ENCODE measurements at regions of chr13 and their contacts with region 1.

Region 1: GRCh38 chr13:49495783-49496762 is at the start of gene PHF11:
- DNase-seq: peak; percentile 95
- H3K4me3 Mint-ChIP-seq: peak within 1 kb of the TSS; percentile 91
- H3K27ac Mint-ChIP-seq: peak within 1 kb of the TSS; percentile 96
- H3K4me1 Mint-ChIP-seq: peaks cover 49% of the 10 kb centered on the region
- H3K27me3 Mint-ChIP-seq: no peaks in the 10 kb centered on the region
- total RNA-seq, gene PHF11: 91.4 to 96.9 TPM

Region 2: GRCh38 chr13:48892053-48892690 is 603.9 kb before region 1 on chr13:
- CTCF ChIA-PET with region 1: no interaction called
- intact Hi-C with region 1: loop called (anchors 1 kb)
- DNase-seq: no peak
- H3K4me3 Mint-ChIP-seq: no peak overlapping the region
- H3K27ac Mint-ChIP-seq: peak overlapping the region; percentile 39
- H3K4me1 Mint-ChIP-seq: peaks cover 32% of the 10 kb centered on the region
- H3K27me3 Mint-ChIP-seq: peaks cover 2% of the 10 kb centered on the region

Region 3: DNA sequence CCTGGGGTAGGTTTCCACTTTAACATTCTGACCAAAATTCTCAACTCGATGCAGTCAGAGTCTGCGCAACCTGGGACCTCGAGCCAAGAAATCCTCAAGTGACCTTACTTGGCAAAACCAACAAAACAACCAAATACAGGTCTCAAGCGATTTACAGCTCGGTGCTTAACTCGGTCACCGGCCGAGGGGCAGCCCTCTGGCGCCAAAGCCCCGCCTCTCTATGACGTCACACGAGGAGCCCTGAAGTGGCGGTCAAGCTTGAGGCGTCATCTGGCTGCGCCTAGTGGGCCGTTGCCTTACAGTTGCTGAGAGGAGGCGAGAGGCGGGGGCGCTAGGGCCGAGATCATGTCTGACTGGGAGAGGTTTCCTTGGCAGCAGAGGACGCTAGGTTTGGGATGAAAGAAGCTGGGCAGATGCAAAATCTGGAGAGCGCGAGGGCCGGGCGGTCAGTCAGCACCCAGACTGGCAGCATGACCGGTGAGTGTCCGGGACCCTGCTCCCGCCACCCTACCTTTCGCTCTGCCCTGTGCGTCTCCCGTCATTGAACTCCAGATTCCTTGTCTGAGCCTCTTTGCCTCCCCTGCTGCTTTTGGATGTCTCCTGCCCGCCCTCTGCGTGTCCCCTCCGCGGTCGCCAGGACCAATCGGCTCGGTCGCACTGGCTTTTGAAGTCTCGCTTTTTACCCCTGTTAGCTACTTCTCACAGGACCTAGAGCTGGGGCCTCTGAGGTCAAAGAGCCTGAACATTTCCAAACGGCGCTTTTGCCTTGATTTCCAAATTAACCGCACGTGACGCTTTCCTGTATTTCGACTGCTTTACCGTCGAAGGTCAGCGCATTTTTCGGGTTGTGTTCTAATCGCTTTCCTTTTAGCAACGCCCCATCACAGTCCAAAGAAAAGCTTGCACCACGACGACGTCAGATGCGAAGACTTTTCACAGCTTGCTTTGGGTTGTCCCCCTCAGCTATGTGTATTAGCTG is 248.1 kb before region 1 on chr13 and contains the start of gene CDADC1:
- CTCF ChIA-PET with region 1: no interaction called
- intact Hi-C with region 1: loop called (anchors 5 kb)
- DNase-seq: peak; percentile 96
- H3K4me3 Mint-ChIP-seq: peak within 1 kb of the TSS; percentile 98
- H3K27ac Mint-ChIP-seq: peak within 1 kb of the TSS; percentile 92
- H3K4me1 Mint-ChIP-seq: peaks cover 34% of the 10 kb centered on the region
- H3K27me3 Mint-ChIP-seq: no peaks in the 10 kb centered on the region
- total RNA-seq, gene CDADC1: 13.2 to 14.7 TPM

Region 4: GRCh38 chr13:49454388-49455006 is 41.6 kb before region 1 on chr13:
- CTCF ChIA-PET with region 1: no interaction called
- intact Hi-C with region 1: loop called (anchors 1 kb)
- DNase-seq: no peak
- H3K4me3 Mint-ChIP-seq: no peak overlapping the region
- H3K27ac Mint-ChIP-seq: no peak overlapping the region
- H3K4me1 Mint-ChIP-seq: peaks cover 20% of the 10 kb centered on the region
- H3K27me3 Mint-ChIP-seq: no peaks in the 10 kb centered on the region

Region 5: GRCh38 chr13:49549289-49549688 is 53.2 kb after region 1 on chr13:
- CTCF ChIA-PET with region 1: no interaction called
- intact Hi-C with region 1: no loop called
- DNase-seq: no peak
- H3K4me3 Mint-ChIP-seq: no peak overlapping the region
- H3K27ac Mint-ChIP-seq: no peak overlapping the region
- H3K4me1 Mint-ChIP-seq: no peaks in the 10 kb centered on the region
- H3K27me3 Mint-ChIP-seq: no peaks in the 10 kb centered on the region

Region 6: DNA sequence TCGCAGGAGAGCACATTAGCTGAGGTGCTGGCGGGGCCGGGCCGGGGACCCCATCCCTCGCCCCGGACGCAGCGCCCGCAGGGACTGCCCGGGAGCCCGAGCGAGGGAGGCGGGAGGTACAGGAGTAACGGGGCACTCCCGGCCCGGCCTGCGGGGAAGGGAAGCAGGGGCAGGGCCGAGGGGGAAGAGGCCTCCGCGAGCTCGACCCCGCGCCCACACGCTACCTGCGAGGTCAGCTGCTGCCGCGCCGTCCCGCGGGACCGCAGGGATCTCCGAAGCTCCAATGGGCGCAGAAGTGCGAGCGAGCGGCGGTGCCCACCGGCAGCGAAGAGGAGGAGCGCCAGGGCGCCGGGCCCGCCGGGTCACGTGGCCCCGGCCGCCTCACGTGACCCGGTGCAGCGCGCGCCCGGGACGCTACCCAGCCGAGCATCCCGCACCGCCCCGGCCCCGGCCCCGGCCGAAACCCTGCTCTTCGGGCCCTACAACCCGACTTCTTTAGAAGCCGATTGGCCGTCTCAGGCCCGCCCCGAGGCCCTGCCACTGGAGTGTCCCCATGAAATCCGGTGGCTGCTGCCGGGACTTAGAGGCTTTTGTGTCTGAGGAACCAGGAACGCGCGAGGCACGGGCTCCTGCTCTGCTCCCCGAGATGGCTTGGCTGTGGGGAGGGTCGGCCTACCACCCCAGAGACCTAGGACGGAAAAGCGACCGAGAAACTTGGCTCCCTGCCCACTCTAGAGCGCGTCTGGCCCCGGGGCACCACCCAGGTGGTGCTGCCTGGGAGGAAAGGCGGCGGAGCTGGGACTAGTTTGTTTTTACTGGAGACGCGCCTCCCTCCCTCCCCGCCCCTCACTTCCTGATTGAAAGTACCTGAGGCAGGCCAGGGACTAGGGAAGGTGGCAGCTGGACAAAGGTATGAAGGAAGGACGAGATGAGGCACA is 89.4 kb after region 1 on chr13 and contains the start of gene RCBTB1:
- CTCF ChIA-PET with region 1: no interaction called
- intact Hi-C with region 1: loop called (anchors 1 kb)
- DNase-seq: peak; percentile 56
- H3K4me3 Mint-ChIP-seq: peak within 1 kb of the TSS; percentile 88
- H3K27ac Mint-ChIP-seq: peak within 1 kb of the TSS; percentile 61
- H3K4me1 Mint-ChIP-seq: peaks cover 25% of the 10 kb centered on the region
- H3K27me3 Mint-ChIP-seq: no peaks in the 10 kb centered on the region
- total RNA-seq, gene RCBTB1: 17.8 to 19.2 TPM

Region 7: DNA sequence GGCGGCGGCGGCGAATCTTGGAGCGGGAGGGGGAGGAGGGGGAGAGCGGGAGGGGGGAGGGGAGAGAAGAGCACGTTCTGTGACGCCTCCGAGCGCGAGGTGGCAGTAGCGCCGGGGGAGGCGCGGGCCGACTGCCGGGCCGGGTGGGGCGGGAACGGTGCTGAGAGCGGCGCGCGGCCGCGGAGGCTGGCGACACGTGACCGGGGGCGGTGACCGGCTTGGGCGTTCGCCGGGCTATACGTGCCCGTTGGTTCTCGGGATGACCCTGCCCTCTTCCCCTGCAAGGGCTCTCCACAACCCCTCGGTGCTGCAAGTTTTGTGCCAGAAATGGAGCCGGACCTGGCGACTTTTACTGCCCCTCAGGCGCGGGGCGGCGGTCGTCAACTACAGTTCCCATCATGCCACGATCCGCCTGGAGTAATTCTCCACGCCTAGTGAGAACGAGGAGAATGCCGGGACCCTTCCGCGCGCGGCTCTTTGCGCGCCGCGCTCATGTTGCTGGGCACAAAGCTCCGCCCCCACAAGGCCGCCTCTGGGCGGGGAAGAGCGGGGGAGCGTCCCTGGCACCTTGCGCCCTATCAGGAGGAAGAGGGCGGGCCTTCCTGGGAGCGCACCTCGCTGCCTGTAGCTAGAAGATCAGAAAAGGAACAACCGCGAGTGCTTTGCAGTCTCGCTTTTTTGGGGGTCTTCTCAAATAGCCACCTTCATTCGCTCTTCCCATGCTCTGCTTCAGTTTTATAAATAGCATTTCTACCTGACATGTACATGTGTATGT is 296.7 kb after region 1 on chr13 and contains the start of gene KPNA3:
- CTCF ChIA-PET with region 1: interaction called, 3 read pairs
- intact Hi-C with region 1: loop called (anchors 1 kb)
- DNase-seq: peak; percentile 96
- H3K4me3 Mint-ChIP-seq: peak within 1 kb of the TSS; percentile 92
- H3K27ac Mint-ChIP-seq: peak within 1 kb of the TSS; percentile 94
- H3K4me1 Mint-ChIP-seq: peaks cover 29% of the 10 kb centered on the region
- H3K27me3 Mint-ChIP-seq: peaks cover 4% of the 10 kb centered on the region
- total RNA-seq, gene KPNA3: 47.9 to 50.7 TPM

Region 8: DNA sequence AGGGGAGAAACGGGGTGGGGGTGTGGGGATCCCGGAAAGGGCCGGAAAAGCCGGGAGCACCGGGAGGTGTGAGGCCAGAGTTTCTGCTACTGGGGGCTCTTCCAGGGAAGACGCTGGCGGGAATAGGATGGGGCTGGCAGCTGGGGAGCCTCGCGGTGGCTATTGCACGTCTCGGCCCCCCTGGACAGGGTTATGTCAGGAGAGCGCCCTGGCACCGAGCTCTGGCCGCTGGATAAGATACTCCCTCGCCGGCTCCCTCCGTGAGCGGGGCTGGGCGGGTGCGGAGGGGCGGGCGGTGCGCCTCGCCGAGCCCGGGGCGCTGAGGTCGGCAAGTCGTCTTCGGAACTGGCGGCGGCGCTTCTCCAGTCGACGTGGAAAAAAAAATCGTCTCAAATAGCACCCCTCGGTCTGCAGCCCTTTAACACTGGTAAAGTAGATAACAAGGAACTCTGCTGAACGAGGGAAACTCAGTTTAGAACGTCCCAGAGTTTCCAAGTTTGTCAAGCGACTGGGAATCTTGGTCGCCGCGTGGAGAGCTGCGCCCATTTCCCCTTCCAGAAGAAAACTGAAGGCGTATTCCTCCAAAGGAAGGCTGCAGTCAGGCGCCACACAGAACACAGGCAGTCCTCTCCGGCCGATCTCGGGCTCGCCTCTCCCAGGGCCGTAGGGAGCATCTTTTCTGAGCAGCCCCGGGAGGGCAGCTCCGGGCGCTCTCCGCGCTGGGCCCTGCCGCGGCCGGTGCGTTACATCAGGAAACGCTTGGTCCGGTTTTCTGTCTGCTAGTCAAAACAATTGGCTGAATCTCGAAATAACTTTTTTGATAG is 634.3 kb after region 1 on chr13:
- CTCF ChIA-PET with region 1: no interaction called
- intact Hi-C with region 1: loop called (anchors 5 kb)
- DNase-seq: peak; percentile 24
- H3K4me3 Mint-ChIP-seq: peak overlapping the region; percentile 66
- H3K27ac Mint-ChIP-seq: peak overlapping the region; percentile 50
- H3K4me1 Mint-ChIP-seq: peaks cover 62% of the 10 kb centered on the region
- H3K27me3 Mint-ChIP-seq: peaks cover 60% of the 10 kb centered on the region

Measured in activated naive CD4-positive, alpha-beta T cell treated with anti-CD3 and anti-CD28 coated beads for 36 hours (primary cell).